ENCODE measurements at regions of chr9 and their contacts with region 1.

Region 1: DNA sequence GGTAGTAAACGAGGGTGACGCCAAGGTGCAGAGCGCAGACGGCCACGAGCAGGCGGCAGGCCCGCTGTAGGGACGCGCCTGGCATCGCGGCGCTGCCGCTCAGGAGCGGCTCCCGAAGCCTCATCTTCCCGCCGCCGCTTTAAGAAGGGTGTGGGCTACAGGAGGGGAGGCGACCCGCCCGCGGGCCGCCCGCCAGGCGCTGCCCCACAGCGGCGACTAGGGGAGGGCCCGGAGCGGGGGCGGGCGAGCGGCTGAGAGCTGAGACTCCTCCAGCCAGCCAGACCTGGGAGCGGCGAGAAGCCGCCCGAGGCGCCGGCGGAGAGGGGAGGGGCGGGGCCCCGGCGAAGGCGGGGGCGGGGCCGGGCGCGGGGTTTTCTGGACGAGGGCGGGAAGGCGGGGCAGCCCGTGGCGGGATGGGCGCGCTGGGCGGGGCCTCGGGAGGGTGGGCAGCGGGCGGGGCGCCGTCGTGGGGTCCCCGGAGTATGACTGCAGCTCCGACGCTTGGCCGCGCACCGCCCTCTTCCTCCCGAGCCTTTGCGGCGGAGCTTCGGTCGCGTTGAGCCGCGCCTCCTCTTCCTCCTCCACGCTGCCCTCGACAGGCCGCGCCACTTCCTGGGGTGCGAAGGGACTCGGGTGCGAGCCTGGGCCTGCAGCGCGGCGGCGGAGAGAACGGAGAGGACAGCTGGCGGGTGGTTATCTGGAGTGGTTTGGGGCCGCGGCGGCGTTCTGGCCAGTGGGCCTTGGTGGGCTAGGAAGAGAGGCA is at the start of gene B4GALT1:
- DNase-seq: peak; percentile 97
- ATAC-seq: peak; percentile 80
- total RNA-seq, gene B4GALT1: 41.0 TPM

Region 2: GRCh38 chr9:33081128-33081851 is 85.9 kb before region 1 on chr9:
- intact Hi-C with region 1: loop called (anchors 2 kb)
- DNase-seq: no peak
- ATAC-seq: peak; percentile 69

Region 3: DNA sequence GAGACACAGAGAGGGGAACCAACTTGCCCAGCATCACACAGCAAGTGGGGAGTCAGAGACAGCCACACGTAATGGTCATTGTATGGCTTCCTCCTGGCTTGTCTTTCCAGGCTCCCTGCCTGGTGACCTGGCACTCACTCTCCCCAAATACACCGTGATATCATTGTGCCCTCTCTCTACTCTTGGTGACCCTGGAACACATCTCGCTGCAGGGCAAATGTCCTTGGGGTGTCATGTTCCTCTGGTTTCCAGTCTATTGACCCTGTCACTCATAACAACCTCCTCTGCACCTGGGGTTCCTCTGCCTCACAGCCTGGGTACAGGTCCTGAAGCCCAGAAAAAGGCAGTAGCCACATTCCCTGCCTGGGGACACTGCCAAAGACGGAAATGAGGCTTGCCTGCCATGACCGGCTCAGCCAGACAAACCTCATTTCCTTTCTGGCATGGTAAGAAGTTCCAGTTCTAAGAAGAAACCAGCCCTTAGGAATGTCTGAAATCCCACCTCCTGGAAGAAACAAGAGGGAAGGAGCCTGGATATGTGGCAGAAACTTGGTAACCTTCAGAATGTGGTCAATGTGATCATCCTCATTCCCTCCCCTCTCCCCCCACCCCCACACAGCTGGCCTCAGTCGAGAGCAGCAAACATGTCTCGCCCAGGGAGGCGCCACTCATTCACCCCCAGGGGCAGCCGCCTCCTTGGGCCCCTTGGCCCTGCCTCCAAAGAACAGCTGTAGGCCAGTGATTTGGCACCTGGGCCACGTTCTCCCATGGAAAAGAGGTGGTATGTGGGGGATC is 60.2 kb before region 1 on chr9:
- intact Hi-C with region 1: loop called (anchors 10 kb)
- DNase-seq: peak; percentile 63
- ATAC-seq: peak; percentile 46

Region 4: GRCh38 chr9:33130508-33130911 is 36.7 kb before region 1 on chr9:
- intact Hi-C with region 1: loop called (anchors 5 kb)
- DNase-seq: no peak
- ATAC-seq: no peak

Region 5: DNA sequence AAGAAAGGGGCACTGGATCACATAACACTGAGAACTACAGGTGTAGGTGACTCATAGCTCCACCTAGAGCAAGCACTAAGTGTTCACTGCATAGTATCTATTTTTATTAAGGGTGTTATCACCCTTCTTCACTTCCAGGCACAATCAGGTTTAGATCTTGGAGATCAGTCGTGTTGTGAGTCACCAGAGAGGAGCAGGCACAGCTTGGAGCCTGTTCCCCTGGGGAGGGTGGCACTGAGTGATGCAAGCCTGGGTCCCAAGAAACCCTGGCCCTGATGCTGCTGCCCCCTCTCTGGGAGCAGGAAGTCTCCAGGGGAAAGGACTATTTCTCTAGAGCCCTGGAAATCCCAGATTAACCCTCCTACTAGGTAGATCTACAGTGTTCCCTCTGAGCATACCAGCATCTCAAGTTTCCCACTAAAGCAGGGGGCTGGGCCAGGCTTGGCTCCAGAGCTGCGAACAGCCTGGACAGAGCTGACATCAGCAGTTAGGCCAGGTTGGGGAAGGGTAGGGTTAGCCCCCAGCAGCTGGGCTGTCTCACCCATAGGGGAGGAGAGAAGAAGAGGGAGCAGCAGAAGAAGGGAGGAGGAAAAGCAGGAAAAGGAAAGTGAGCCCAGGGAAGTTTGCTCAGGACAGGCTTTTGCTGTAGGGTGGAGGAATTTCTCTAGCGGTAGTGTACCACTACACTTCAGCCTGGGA is 44.6 kb after region 1 on chr9:
- intact Hi-C with region 1: no loop called
- DNase-seq: no peak
- ATAC-seq: peak; percentile 38

Region 6: GRCh38 chr9:33225319-33226149 is 58.3 kb after region 1 on chr9:
- intact Hi-C with region 1: loop called (anchors 5 kb)
- DNase-seq: no peak
- ATAC-seq: peak; percentile 62